GM10248 (cell line): ENCODE measurements at regions of chr14 and their contacts with region 1.

Region 1: DNA sequence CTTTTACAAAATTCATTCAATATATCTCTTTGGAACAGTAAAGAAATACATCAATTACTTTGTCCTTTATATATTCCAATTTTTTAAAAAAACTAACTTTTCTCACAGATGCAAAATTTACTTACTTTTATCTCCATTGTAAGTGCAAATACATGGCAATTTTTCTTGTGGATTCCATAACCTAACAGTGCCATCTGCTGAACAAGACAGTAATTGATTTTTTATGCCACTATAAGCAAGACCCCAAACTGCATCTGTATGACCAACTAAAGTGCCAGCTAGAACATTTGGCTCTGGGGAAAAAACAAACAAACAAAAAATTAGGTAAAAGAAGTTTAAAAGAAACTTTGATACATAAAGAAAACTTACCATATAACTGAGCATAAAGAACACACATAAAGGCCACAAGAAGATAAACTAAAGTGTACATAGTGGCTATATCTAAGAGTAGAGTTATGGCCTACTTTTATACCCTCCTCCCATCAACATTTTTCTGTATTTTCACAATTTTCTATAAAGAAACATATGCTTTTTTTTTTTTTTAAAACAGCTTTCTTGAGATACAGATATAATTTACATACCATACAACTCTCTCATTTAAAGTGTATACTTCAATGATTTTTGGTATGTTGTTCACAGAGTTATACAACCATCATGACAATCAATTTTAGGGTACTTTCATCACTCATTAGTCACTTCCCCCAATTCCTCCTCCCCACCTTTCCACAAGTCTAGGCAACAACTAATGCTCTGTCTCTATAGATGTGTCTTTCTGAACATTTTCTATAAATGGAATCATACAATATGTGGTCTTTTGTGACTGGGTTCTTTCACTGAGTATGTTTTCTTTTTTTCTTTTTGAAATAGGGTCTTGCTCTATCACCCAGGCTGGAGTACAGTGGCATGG is 32.6 kb downstream of the COCH start:
- DNase-seq: no peak
- CTCF ChIP-seq: peak; percentile 46

Region 2: GRCh38 chr14:30656190-30656632 is 250.8 kb before region 1 on chr14:
- CTCF ChIA-PET with region 1: interaction called, 11 read pairs
- POLR2A ChIA-PET with region 1: no interaction called
- DNase-seq: peak; percentile 14
- CTCF ChIP-seq: peak; percentile 66